Activated CD8-positive, alpha-beta T cell treated with anti-CD3 and anti-CD28 coated beads for 36 hours (primary cell): ENCODE measurements at regions of chr11 and their contacts with region 1.

Region 1: GRCh38 chr11:118240999-118241768 is 11.0 kb downstream of the MPZL3 start:
- DNase-seq: peak; percentile 85
- ATAC-seq: peak; percentile 82
- H3K4me3 Mint-ChIP-seq: peak overlapping the region; percentile 86
- H3K27ac Mint-ChIP-seq: peak overlapping the region; percentile 97
- H3K4me1 Mint-ChIP-seq: peaks cover 78% of the 10 kb centered on the region
- H3K27me3 Mint-ChIP-seq: no peaks in the 10 kb centered on the region
- CTCF ChIP-seq: no peak

Region 2: GRCh38 chr11:118211006-118211405 is 30.2 kb before region 1 on chr11:
- CTCF ChIA-PET with region 1: interaction called, 7 read pairs
- POLR2A ChIA-PET with region 1: interaction called, 364 read pairs
- intact Hi-C with region 1: no loop called
- DNase-seq: no peak
- ATAC-seq: no peak
- H3K4me3 Mint-ChIP-seq: no peak overlapping the region
- H3K27ac Mint-ChIP-seq: peak overlapping the region; percentile 100
- H3K4me1 Mint-ChIP-seq: peaks cover 85% of the 10 kb centered on the region
- H3K27me3 Mint-ChIP-seq: no peaks in the 10 kb centered on the region
- CTCF ChIP-seq: no peak

Region 3: DNA sequence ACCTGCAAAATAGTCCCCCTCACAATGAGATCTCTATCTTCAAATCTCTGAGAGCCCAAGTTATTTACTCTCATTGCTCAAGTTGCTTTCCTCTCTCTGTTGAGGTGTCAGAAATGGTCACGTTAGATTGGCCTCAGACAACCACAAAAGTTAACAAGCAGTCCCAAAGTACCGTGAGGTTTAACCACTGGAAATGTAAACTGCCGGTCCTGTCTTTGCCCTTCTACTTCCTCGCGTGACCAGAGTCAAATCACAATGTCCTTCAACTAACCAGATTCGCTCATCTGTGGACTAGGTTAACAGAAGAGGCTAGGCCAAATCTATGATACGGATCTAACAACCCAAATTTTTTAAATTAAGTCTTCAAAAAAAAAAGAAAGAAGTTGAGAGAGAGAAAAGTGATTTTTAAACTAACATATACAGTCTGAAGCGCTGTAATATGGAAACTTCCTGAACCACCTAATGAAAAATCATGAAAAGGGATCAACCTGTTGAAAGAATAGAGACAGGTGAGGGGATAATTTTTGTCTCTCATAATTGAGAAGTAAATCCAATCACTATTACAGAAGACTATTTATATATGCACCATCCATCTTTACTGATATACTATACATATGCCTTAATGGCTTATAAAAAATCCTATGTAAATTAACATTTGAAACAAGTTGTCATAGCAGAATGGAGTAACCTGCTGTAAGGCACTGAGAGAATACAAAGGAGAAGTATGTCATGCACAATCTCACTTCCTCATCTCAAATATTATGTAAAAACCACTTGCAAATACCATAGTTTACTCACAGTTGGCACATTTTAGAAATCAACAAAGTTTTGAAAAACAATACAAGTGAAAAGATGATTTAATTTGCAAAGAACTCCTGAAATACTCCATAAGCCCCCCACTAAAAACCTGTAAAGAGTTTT is 13.1 kb before region 1 on chr11:
- CTCF ChIA-PET with region 1: interaction called, 7 read pairs
- POLR2A ChIA-PET with region 1: interaction called, 364 read pairs
- intact Hi-C with region 1: loop called (anchors 2 kb)
- DNase-seq: peak; percentile 60
- ATAC-seq: peak; percentile 2
- H3K4me3 Mint-ChIP-seq: peak overlapping the region; percentile 52
- H3K27ac Mint-ChIP-seq: no peak overlapping the region
- H3K4me1 Mint-ChIP-seq: peaks cover 39% of the 10 kb centered on the region
- H3K27me3 Mint-ChIP-seq: no peaks in the 10 kb centered on the region
- CTCF ChIP-seq: no peak